ENCODE measurements at regions of chr3 and their contacts with region 1.

Region 1: GRCh38 chr3:36957862-36958686 is 13.2 kb upstream of the TRANK1 start:
- DNase-seq: peak; percentile 18
- H3K4me3 Mint-ChIP-seq: no peak overlapping the region
- H3K27ac Mint-ChIP-seq: no peak overlapping the region
- H3K4me1 Mint-ChIP-seq: peaks cover 10% of the 10 kb centered on the region
- H3K27me3 Mint-ChIP-seq: no peaks in the 10 kb centered on the region

Region 2: DNA sequence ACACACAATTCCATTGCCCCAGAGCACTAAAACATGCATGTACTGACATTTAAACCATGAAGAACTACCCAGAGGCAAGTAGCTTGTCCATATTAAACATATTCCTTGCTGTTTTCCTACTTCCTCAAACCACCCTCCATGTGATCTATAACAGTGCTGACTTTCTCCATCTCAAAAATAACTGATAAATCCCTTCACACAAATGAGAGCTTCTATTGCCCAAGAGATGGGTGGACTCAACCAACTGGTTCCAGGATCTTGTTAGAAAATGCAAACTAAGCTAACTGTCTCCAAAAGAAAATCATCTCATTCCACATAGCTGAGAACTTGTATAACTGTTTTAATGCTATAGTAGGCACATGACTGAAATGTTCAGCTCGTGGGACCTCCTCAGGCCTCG is 223.3 kb before region 1 on chr3:
- CTCF ChIA-PET with region 1: interaction called, 13 read pairs
- POLR2A ChIA-PET with region 1: no interaction called
- intact Hi-C with region 1: loop called (anchors 1 kb)
- DNase-seq: no peak
- H3K4me3 Mint-ChIP-seq: no peak overlapping the region
- H3K27ac Mint-ChIP-seq: no peak overlapping the region
- H3K4me1 Mint-ChIP-seq: no peaks in the 10 kb centered on the region
- H3K27me3 Mint-ChIP-seq: no peaks in the 10 kb centered on the region

Region 3: GRCh38 chr3:36843065-36844051 is 114.7 kb before region 1 on chr3:
- CTCF ChIA-PET with region 1: interaction called, 19 read pairs
- POLR2A ChIA-PET with region 1: no interaction called
- intact Hi-C with region 1: loop called (anchors 2 kb)
- DNase-seq: peak; percentile 86
- H3K4me3 Mint-ChIP-seq: no peak overlapping the region
- H3K27ac Mint-ChIP-seq: no peak overlapping the region
- H3K4me1 Mint-ChIP-seq: peaks cover 25% of the 10 kb centered on the region
- H3K27me3 Mint-ChIP-seq: no peaks in the 10 kb centered on the region

Region 4: DNA sequence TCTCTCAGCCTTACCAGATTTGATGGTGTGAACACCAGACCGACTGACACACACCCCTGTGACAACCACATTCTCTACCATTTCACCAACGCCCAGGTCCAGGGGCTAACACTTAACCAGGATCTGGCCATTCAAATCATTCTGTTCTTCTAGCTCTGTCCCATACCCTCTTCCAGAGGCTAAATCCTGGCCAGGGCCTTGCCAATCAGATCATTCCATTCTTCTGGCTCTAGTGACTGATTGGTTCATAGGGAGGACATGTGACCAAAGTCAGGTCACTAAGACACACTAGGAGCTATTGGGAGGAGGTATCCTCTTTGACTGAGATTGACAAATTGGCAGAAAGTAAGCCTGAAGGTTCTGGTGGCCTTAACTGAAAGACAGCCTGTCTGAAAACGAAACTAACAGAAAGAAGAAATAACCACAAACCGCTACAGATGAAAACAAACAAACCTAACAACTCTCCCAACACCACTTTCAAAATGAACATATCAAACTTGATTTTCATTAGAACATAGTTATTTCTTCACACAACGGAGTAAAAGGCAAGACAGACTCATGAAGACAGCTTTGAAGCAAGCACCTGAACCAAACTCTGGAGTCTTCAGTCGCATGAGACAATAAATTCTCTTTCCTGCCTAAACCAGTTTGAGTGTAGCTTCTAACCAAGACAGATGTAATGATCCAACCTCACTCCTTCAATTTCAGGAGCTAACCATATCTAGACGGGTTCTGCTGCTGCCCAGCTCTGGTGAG is 81.7 kb before region 1 on chr3:
- CTCF ChIA-PET with region 1: interaction called, 12 read pairs
- POLR2A ChIA-PET with region 1: no interaction called
- intact Hi-C with region 1: no loop called
- DNase-seq: peak; percentile 26
- H3K4me3 Mint-ChIP-seq: peak overlapping the region; percentile 21
- H3K27ac Mint-ChIP-seq: peak overlapping the region; percentile 71
- H3K4me1 Mint-ChIP-seq: peaks cover 42% of the 10 kb centered on the region
- H3K27me3 Mint-ChIP-seq: peaks cover 3% of the 10 kb centered on the region

Region 5: DNA sequence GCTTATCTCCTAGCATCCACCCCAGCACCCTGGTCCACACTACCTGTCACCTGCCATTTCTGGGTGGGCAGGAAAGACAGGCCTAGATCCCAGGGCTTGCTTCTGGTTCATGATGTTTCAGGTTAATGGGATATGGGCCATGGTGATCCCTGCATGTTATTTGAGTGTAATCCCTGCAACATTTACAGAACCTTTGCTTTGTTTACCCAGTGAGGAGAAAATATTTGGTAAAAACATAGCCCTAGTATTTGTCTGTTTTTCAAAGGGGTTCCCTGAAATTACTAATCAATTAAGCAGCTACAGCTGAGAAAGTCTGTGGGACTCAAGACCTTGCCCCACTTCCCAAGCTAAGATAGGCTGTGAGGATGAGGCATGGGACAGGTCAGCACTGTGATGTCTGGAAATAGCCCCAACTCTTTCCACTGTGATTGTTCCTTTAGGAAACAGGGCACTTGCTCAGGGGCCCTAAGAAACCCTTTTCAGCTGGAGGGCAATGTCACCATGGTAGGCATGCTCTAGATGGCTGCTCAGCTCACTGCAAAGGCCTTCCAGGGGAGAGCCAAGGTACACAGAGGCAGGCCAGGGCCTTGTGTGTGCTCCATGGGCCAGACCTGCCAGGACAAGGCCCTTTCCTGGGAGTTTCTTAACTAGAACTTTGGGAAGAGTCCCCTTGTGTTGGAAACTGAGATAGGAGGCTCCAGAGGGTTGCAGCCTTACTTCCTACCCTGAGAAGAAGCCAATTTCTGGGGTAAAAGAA is 24.4 kb before region 1 on chr3:
- CTCF ChIA-PET with region 1: interaction called, 14 read pairs
- POLR2A ChIA-PET with region 1: no interaction called
- intact Hi-C with region 1: no loop called
- DNase-seq: no peak
- H3K4me3 Mint-ChIP-seq: no peak overlapping the region
- H3K27ac Mint-ChIP-seq: no peak overlapping the region
- H3K4me1 Mint-ChIP-seq: no peaks in the 10 kb centered on the region
- H3K27me3 Mint-ChIP-seq: no peaks in the 10 kb centered on the region

Region 6: DNA sequence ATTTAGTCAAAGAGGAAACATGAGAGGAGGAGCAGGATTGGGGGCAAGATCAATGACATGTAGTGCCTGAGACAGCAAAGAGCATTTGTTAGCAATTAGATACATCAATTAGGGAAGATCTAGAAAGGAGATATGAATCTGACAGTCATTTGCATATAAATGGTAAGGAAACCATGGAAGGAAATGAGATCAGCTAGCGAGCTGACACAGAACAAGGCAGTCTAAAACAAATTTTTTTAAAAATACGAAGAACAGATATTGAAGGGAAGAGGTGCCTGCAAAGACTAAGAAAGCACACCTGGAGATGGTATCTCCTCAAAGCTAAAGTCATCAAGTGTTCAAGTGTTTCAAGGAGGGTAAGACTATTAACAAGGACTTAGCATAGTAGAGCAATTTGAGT is 30.3 kb after region 1 on chr3:
- CTCF ChIA-PET with region 1: interaction called, 10 read pairs
- POLR2A ChIA-PET with region 1: no interaction called
- intact Hi-C with region 1: no loop called
- DNase-seq: no peak
- H3K4me3 Mint-ChIP-seq: peak overlapping the region; percentile 30
- H3K27ac Mint-ChIP-seq: peak overlapping the region; percentile 7
- H3K4me1 Mint-ChIP-seq: peaks cover 42% of the 10 kb centered on the region
- H3K27me3 Mint-ChIP-seq: no peaks in the 10 kb centered on the region

Region 7: DNA sequence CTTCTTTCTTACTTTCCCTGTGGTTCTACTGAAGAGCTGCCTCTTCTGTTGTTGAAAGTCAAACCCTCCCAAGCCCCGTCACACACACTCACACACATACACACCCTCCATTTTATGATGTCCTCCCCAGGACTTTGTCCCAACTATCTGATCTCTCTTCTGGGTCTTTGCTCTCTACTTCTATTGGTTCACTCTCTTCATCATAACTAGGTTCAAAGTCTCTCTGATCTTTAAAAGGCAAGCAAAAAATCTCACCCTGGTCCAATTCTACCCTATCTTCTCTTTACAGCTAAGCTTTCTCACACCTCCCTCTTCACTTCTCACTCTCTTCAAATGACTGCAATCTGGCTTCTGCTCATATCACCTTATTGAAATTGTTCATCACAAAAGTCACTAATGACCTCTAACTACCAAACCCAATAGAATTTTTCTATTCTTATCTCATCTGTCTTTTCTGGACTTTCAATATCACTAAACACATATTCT is 181.5 kb after region 1 on chr3:
- CTCF ChIA-PET with region 1: no interaction called
- POLR2A ChIA-PET with region 1: no interaction called
- intact Hi-C with region 1: no loop called
- DNase-seq: no peak
- H3K4me3 Mint-ChIP-seq: no peak overlapping the region
- H3K27ac Mint-ChIP-seq: no peak overlapping the region
- H3K4me1 Mint-ChIP-seq: peaks cover 17% of the 10 kb centered on the region
- H3K27me3 Mint-ChIP-seq: no peaks in the 10 kb centered on the region